ENCODE measurements at regions of chr1 and their contacts with region 1.

Region 1: GRCh38 chr1:11645670-11646265 is 8.5 kb downstream of the FBXO2 start:
- DNase-seq: peak; percentile 66
- ATAC-seq: peak; percentile 48
- H3K4me3 Mint-ChIP-seq: no peak overlapping the region
- H3K27ac Mint-ChIP-seq: no peak overlapping the region
- H3K4me1 Mint-ChIP-seq: peaks cover 15% of the 10 kb centered on the region
- H3K27me3 Mint-ChIP-seq: peaks cover 2% of the 10 kb centered on the region
- CTCF ChIP-seq: no peak

Region 2: DNA sequence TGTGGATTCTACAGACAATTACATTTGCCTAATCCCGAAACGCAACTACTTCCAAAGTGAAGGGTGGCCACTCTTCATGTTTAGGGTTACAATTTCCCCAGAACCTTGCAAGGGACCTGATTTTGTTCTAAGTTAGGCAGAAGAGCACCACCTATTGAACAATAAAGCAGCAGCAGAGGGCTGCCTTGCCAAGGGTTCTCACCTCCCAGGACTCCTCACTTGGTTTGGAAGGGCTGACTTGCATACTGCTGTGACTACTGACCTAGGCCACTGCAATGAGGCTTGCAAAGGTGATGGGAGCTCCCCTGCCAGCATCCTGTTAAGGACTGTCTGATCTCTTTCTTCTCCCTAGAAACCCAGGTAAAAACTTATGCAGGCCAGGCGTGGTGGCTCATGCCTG is 397.6 kb before region 1 on chr1:
- CTCF ChIA-PET with region 1: interaction called, 37 read pairs
- POLR2A ChIA-PET with region 1: no interaction called
- intact Hi-C with region 1: no loop called
- DNase-seq: no peak
- ATAC-seq: no peak
- H3K4me3 Mint-ChIP-seq: no peak overlapping the region
- H3K27ac Mint-ChIP-seq: no peak overlapping the region
- H3K4me1 Mint-ChIP-seq: no peaks in the 10 kb centered on the region
- H3K27me3 Mint-ChIP-seq: no peaks in the 10 kb centered on the region
- CTCF ChIP-seq: no peak

Region 3: DNA sequence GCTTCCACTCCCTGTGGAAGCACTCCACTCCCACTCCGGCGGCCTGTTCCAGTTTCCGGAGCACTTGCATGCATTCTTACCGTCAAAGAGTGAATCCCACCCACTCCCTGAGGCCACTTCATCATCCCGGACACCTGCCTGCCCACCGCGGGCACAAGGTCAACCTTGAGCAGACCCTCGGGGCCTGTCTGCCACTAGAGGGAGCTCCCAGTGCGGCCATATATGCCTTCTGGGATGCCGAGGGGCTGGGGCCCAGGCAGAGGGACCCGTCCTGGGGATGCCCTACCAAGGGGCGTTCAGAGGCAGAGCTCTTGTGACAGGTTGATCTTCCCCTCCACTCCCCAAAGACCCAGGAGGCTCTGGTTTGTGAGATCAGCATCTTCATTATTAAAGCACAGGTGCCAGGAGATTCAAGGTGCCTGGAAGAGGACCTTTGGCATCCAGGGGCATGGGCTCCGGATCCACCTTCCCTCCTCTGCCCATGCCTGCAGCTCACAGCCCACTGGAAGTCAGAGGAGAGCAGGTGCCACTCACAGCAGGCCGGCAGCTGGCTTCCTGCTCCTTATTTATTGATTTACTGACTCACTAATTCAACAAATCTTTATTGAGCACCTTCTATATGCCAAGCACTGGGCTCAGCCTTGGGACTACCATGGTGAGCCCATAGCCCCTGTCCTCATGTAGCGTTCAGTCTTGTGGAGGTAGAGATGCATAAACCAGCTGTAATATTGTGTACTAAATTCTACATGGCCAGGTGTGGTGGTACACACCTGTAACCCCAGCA is 325.4 kb before region 1 on chr1:
- CTCF ChIA-PET with region 1: interaction called, 10 read pairs
- POLR2A ChIA-PET with region 1: no interaction called
- intact Hi-C with region 1: loop called (anchors 1 kb)
- DNase-seq: peak; percentile 33
- ATAC-seq: peak; percentile 45
- H3K4me3 Mint-ChIP-seq: no peak overlapping the region
- H3K27ac Mint-ChIP-seq: no peak overlapping the region
- H3K4me1 Mint-ChIP-seq: peaks cover 4% of the 10 kb centered on the region
- H3K27me3 Mint-ChIP-seq: peaks cover 10% of the 10 kb centered on the region
- CTCF ChIP-seq: no peak

Region 4: GRCh38 chr1:11478571-11479374 is 167.0 kb before region 1 on chr1 and contains the start of gene DISP3:
- CTCF ChIA-PET with region 1: no interaction called
- POLR2A ChIA-PET with region 1: no interaction called
- intact Hi-C with region 1: loop called (anchors 2 kb)
- DNase-seq: peak; percentile 73
- ATAC-seq: peak; percentile 94
- H3K4me3 Mint-ChIP-seq: peak within 1 kb of the TSS; percentile 71
- H3K27ac Mint-ChIP-seq: no peak within 1 kb of the TSS
- H3K4me1 Mint-ChIP-seq: peaks cover 9% of the 10 kb centered on the region
- H3K27me3 Mint-ChIP-seq: peaks cover 49% of the 10 kb centered on the region
- CTCF ChIP-seq: no peak
- total RNA-seq, gene DISP3: 0.42 and 0.44 TPM in 2 replicates

Region 5: DNA sequence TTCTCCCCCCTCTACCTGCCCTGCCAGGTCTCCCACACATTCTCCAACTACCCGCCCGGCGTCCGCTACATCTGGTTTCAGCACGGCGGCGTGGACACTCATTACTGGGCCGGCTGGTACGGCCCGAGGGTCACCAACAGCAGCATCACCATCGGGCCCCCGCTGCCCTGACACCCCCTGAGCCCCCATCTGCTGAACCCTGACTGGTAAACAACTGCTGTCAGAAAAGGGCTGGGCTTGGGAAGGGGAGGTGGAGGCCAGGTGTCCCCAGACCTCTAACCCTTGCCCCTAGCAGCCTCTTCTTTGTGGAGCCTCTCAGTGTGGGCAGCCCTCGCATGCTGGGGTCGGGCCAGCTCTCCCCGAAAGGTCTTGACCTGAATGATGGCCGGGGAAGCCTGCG is 15.3 kb after region 1 on chr1:
- CTCF ChIA-PET with region 1: interaction called, 19 read pairs
- POLR2A ChIA-PET with region 1: interaction called, 16 read pairs
- intact Hi-C with region 1: no loop called
- DNase-seq: no peak
- ATAC-seq: no peak
- H3K4me3 Mint-ChIP-seq: no peak overlapping the region
- H3K27ac Mint-ChIP-seq: no peak overlapping the region
- H3K4me1 Mint-ChIP-seq: no peaks in the 10 kb centered on the region
- H3K27me3 Mint-ChIP-seq: no peaks in the 10 kb centered on the region
- CTCF ChIP-seq: no peak

Region 6: GRCh38 chr1:11749203-11749689 is 103.5 kb after region 1 on chr1:
- CTCF ChIA-PET with region 1: interaction called, 4 read pairs
- POLR2A ChIA-PET with region 1: no interaction called
- intact Hi-C with region 1: loop called (anchors 1 kb)
- DNase-seq: peak; percentile 27
- ATAC-seq: peak; percentile 99
- H3K4me3 Mint-ChIP-seq: no peak overlapping the region
- H3K27ac Mint-ChIP-seq: peak overlapping the region; percentile 36
- H3K4me1 Mint-ChIP-seq: peaks cover 6% of the 10 kb centered on the region
- H3K27me3 Mint-ChIP-seq: no peaks in the 10 kb centered on the region
- CTCF ChIP-seq: no peak